ENCODE measurements at regions of chr10 and their contacts with region 1.

Region 1: DNA sequence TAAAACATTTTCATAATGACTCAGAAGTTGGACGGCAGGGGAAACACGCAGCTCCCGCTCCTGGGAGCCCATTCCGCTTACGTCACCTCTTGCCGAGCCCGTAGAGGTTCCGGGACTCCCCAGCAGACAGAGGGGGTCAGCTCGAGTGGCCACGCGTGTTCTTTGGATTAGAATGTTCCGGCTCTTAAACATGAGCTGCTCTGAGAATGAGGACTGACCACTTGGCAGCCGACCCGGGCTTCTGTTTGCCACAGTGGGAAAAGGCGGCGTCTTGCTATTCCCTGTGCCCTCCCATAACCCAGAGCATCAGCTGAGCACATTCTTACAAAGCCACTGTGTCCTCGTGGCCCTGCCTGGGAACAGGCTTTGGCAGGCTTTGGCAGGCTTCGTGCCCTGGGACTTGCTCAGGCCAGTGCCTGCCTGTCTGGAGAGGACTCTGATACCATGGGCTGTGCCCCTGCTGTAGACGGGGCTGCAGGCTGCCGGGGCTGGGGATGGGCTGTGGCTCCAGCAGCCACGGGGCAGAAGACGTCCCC is 40.1 kb downstream of the PFKP start:
- DNase-seq: peak; percentile 87
- ATAC-seq: peak; percentile 89

Region 2: DNA sequence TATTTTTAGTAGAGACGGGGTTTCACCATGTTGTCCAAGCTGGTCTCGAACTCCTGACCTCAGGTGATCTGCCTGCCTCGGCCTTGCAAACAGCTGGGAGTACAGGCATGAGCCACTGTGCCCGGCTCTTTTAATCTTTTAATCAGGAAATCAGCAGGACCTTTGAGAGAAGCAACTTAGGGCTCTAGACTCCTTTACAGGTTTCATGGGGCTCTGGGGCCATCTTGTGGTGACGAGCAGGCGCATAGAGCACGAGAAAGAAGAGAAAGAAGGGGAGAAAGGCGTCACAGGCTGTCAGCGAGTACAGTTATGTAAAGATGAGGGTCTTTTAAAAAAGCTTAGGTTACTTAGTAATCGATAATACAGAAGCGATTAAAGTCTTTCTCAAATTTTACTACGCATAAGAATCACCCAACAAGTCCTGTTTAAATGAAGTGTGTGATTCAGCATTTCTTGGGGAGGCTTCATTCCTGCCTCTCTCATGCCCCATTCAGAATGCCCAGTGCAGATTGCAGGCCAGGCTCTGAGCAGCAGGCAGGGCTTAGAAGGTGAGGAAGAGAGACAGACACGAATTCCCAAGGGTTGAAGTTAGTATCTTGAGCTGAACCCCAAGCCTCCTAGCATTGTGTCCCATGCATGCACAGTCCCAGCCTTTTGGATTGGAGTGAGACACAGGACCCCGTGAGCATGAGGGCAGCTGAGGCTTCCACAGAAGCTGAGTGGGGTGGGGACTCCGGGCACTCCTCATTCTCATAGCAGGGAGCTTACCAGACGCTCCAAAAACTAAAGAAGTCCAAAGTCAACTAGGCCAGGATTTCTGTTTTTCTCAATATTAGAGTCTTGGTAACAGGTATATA is 63.8 kb before region 1 on chr10:
- intact Hi-C with region 1: no loop called
- DNase-seq: no peak
- ATAC-seq: peak; percentile 79

Region 3: GRCh38 chr10:3068201-3068967 is 39.1 kb before region 1 on chr10:
- intact Hi-C with region 1: loop called (anchors 5 kb)
- DNase-seq: peak; percentile 86
- ATAC-seq: peak; percentile 55

Region 4: GRCh38 chr10:3090914-3091787 is 16.3 kb before region 1 on chr10:
- intact Hi-C with region 1: loop called (anchors 2 kb)
- DNase-seq: no peak
- ATAC-seq: peak; percentile 61